K562 (cell line): ENCODE measurements at regions of chr1 and their contacts with region 1.

Region 1: GRCh38 chr1:31155216-31155841 is 84.4 kb downstream of the NKAIN1 start:
- DNase-seq: peak; percentile 90 to 95 (median 94)
- ATAC-seq: peak; percentile 92
- H3K4me3 ChIP-seq: peak overlapping the region; percentile 62
- H3K27ac ChIP-seq: peak overlapping the region; percentile 80
- H3K4me1 ChIP-seq: peaks cover 23 to 35% of the 10 kb centered on the region in 2 experiments
- H3K27me3 ChIP-seq: no peaks in the 10 kb centered on the region
- CTCF ChIP-seq: peak; percentile 45 to 63 (median 45); a peak in 4 of 6 replicates
- EP300 ChIP-seq: peak; percentile 5; the same call in 1 of the 2 replicates
- POLR2A ChIP-seq: peak; percentile 80
- RAD21 ChIP-seq: peak in 1 of 2 experiments; percentile 37; a peak in 3 of 4 replicates

Region 2: DNA sequence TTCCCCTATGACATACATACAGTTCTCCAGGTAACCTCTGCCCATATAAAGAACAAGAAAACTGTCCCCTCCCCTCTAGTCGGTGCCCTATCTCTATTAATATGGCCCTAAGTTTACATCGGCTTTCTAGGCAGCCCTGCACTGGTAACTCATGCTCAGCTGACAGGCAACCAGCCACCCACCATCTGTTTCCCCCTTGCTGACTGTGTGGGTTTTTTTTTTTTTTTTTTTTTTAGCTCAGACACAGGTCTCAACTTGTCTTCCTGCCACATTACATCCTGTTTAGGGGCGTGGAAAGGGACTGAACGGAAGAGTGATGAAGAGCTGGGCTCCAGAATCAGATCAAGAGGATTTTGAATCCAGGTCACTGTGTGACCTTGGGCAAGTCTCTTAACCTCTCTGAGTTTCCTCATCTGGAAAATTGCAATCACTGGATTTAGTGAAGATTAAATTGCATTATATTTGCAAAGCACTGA is 411.7 kb before region 1 on chr1:
- CTCF ChIA-PET with region 1: no interaction called
- POLR2A ChIA-PET with region 1: no interaction called
- in situ Hi-C with region 1: no loop called
- intact Hi-C with region 1: no loop called
- DNase-seq: no peak
- ATAC-seq: no peak; the same call in 2 of the 3 replicates
- H3K4me3 ChIP-seq: no peak overlapping the region
- H3K27ac ChIP-seq: no peak overlapping the region
- H3K4me1 ChIP-seq: peaks cover 55 to 56% of the 10 kb centered on the region in 2 experiments
- H3K27me3 ChIP-seq: no peaks in the 10 kb centered on the region
- CTCF ChIP-seq: no peak
- EP300 ChIP-seq: no peak
- POLR2A ChIP-seq: no peak
- RAD21 ChIP-seq: no peak

Region 3: GRCh38 chr1:30977105-30977504 is 178.2 kb before region 1 on chr1:
- CTCF ChIA-PET with region 1: no interaction called
- POLR2A ChIA-PET with region 1: no interaction called
- in situ Hi-C with region 1: no loop called
- intact Hi-C with region 1: loop called (anchors 10 kb)
- DNase-seq: no peak
- ATAC-seq: peak; percentile 68
- H3K4me3 ChIP-seq: no peak overlapping the region
- H3K27ac ChIP-seq: no peak overlapping the region
- H3K4me1 ChIP-seq: no peaks in the 10 kb centered on the region
- H3K27me3 ChIP-seq: no peaks in the 10 kb centered on the region
- CTCF ChIP-seq: 0 out of 6 replicates have a peak, but pooled peaks of 2 of the 3 experiments have one; percentile 16 to 22
- EP300 ChIP-seq: no peak
- POLR2A ChIP-seq: no peak
- RAD21 ChIP-seq: no peak

Region 4: GRCh38 chr1:31065310-31066217 is 89.8 kb before region 1 on chr1 and contains the start of gene PUM1:
- CTCF ChIA-PET with region 1: no interaction called
- POLR2A ChIA-PET with region 1: interaction called, 3 read pairs
- in situ Hi-C with region 1: no loop called
- intact Hi-C with region 1: loop called (anchors 2 kb)
- DNase-seq: peak; percentile 93 to 97 (median 96)
- ATAC-seq: peak; percentile 91
- H3K4me3 ChIP-seq: peak within 1 kb of the TSS; percentile 89
- H3K27ac ChIP-seq: peak within 1 kb of the TSS; percentile 99
- H3K4me1 ChIP-seq: peaks cover 15 to 29% of the 10 kb centered on the region in 2 experiments; a peak in 4 of 5 replicates
- H3K27me3 ChIP-seq: no peaks in the 10 kb centered on the region
- CTCF ChIP-seq: no peak
- EP300 ChIP-seq: peak; percentile 36
- POLR2A ChIP-seq: peak; percentile 98
- RAD21 ChIP-seq: 0 out of 4 replicates have a peak, but pooled peaks of 1 of the 2 experiments have one; percentile 8
- polyA plus RNA-seq, gene PUM1: 37.7 to 43.8 TPM

Region 5: GRCh38 chr1:31101147-31101502 is 54.2 kb before region 1 on chr1:
- CTCF ChIA-PET with region 1: interaction called, 3 read pairs
- POLR2A ChIA-PET with region 1: interaction called, 4 read pairs
- in situ Hi-C with region 1: no loop called
- intact Hi-C with region 1: loop called (anchors 2 kb)
- DNase-seq: peak; percentile 76 to 86 (median 81)
- ATAC-seq: peak; percentile 94
- H3K4me3 ChIP-seq: no peak overlapping the region
- H3K27ac ChIP-seq: peak overlapping the region; percentile 72
- H3K4me1 ChIP-seq: peaks cover 14 to 15% of the 10 kb centered on the region in 2 experiments; a peak in 4 of 5 replicates
- H3K27me3 ChIP-seq: no peaks in the 10 kb centered on the region
- CTCF ChIP-seq: no peak
- EP300 ChIP-seq: no peak
- POLR2A ChIP-seq: no peak; the same call in 1 of the 2 replicates
- RAD21 ChIP-seq: no peak; a peak in 1 of 4 replicates

Region 6: GRCh38 chr1:31174556-31174955 is 19.2 kb after region 1 on chr1:
- CTCF ChIA-PET with region 1: no interaction called
- POLR2A ChIA-PET with region 1: interaction called, 20 read pairs
- in situ Hi-C with region 1: no loop called
- intact Hi-C with region 1: no loop called
- DNase-seq: no peak
- ATAC-seq: no peak
- H3K4me3 ChIP-seq: no peak overlapping the region
- H3K27ac ChIP-seq: no peak overlapping the region
- H3K4me1 ChIP-seq: peaks cover 32% of the 10 kb centered on the region in 2 experiments
- H3K27me3 ChIP-seq: peaks cover 5 to 8% of the 10 kb centered on the region in 2 experiments; a peak in 3 of 5 replicates
- CTCF ChIP-seq: no peak
- EP300 ChIP-seq: no peak
- POLR2A ChIP-seq: no peak
- RAD21 ChIP-seq: no peak

Region 7: DNA sequence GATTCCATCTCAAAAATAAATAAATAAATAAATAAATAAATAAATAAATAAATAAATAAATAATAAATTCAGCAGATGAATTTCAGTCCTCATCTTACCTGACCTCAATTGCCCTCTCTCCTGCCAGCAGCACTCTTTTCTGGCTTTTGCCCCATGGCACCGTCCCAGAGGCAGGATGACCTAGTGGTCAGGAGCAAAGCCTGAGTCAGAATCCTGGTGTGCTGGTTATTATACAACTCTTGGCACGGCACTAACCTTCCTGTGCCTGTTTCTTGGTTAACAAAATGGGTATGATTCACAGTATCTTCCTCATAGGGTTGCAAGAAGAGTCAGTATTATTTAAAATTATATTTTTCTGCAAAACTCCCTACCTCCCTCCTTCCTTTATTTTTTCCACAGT is 41.4 kb after region 1 on chr1:
- CTCF ChIA-PET with region 1: no interaction called
- POLR2A ChIA-PET with region 1: no interaction called
- in situ Hi-C with region 1: no loop called
- intact Hi-C with region 1: no loop called
- DNase-seq: no peak
- ATAC-seq: no peak
- H3K4me3 ChIP-seq: no peak overlapping the region
- H3K27ac ChIP-seq: no peak overlapping the region
- H3K4me1 ChIP-seq: peaks cover 0 to 5% of the 10 kb centered on the region in 2 experiments; a peak in 3 of 5 replicates
- H3K27me3 ChIP-seq: peaks cover 22 to 35% of the 10 kb centered on the region in 2 experiments; a peak in 4 of 5 replicates
- CTCF ChIP-seq: no peak
- EP300 ChIP-seq: no peak
- POLR2A ChIP-seq: no peak
- RAD21 ChIP-seq: no peak